ENCODE measurements at regions of chr1 and their contacts with region 1.

Region 1: GRCh38 chr1:63327417-63328139 is 5.2 kb downstream of the FOXD3 start:
- DNase-seq: peak; percentile 89
- H3K4me3 ChIP-seq: peak overlapping the region in 1 of 2 experiments; percentile 34; a peak in 1 of 4 replicates
- H3K27ac ChIP-seq: no peak overlapping the region
- H3K4me1 ChIP-seq: peaks cover 0 to 3% of the 10 kb centered on the region in 2 experiments; a peak in 1 of 4 replicates
- H3K27me3 ChIP-seq: peaks cover 83% of the 10 kb centered on the region
- CTCF ChIP-seq: peak; percentile 80
- EP300 ChIP-seq: no peak
- RAD21 ChIP-seq: peak; percentile 73

Region 2: GRCh38 chr1:63307196-63307794 is 20.3 kb before region 1 on chr1:
- CTCF ChIA-PET with region 1: interaction called, 10 read pairs
- POLR2A ChIA-PET with region 1: no interaction called
- DNase-seq: no peak
- H3K4me3 ChIP-seq: no peak overlapping the region
- H3K27ac ChIP-seq: no peak overlapping the region
- H3K4me1 ChIP-seq: no peaks in the 10 kb centered on the region
- H3K27me3 ChIP-seq: peaks cover 6% of the 10 kb centered on the region; the same call in 1 of the 2 replicates
- CTCF ChIP-seq: no peak
- EP300 ChIP-seq: no peak
- RAD21 ChIP-seq: no peak

Region 3: GRCh38 chr1:63350320-63350719 is 22.7 kb after region 1 on chr1:
- CTCF ChIA-PET with region 1: interaction called, 22 read pairs
- POLR2A ChIA-PET with region 1: no interaction called
- DNase-seq: no peak
- H3K4me3 ChIP-seq: no peak overlapping the region
- H3K27ac ChIP-seq: no peak overlapping the region
- H3K4me1 ChIP-seq: no peaks in the 10 kb centered on the region
- H3K27me3 ChIP-seq: no peaks in the 10 kb centered on the region; the same call in 1 of the 2 replicates
- CTCF ChIP-seq: no peak
- EP300 ChIP-seq: no peak
- RAD21 ChIP-seq: no peak

Region 4: DNA sequence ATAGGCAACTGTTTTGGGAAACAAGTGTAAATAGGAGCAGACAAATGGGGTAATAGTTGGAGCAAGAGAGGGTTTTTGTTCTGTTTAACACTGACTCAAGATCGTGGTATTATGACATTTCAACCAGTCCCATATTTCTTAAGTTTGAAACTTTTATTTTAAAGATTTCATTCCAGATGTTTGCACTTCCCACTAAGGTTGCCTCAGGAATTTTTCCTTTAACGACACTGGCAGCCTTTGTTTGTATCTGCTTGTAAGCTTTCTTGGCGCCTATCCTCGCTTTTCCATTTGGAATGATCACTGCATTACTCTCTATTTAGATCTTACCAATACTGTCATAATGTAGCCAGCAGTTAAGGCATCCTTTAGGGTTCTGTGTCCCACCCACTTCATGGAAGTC is 107.6 kb after region 1 on chr1:
- CTCF ChIA-PET with region 1: interaction called, 50 read pairs
- POLR2A ChIA-PET with region 1: no interaction called
- DNase-seq: no peak
- H3K4me3 ChIP-seq: no peak overlapping the region
- H3K27ac ChIP-seq: no peak overlapping the region
- H3K4me1 ChIP-seq: no peaks in the 10 kb centered on the region
- H3K27me3 ChIP-seq: no peaks in the 10 kb centered on the region
- CTCF ChIP-seq: no peak
- EP300 ChIP-seq: no peak
- RAD21 ChIP-seq: no peak

Region 5: DNA sequence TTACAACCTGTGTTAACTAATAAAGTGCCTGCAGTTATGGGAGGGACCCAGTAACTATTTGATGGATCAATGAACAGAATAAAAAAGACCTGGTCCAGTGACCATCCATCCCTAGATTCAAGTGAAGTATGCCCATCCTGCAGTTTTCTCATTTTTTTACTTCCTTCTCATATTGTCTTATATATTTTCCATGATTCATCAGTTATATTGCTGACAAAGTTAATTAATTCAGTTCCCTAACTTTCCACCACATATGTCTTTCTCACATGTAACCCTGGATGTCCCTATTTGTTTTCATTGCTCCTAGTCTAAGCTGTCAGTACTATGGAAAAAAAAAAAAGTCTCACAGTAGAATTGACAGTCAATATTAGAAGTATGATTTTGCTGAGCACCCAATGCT is 131.2 kb after region 1 on chr1:
- CTCF ChIA-PET with region 1: interaction called, 16 read pairs
- POLR2A ChIA-PET with region 1: no interaction called
- DNase-seq: no peak
- H3K4me3 ChIP-seq: no peak overlapping the region
- H3K27ac ChIP-seq: no peak overlapping the region
- H3K4me1 ChIP-seq: no peaks in the 10 kb centered on the region
- H3K27me3 ChIP-seq: no peaks in the 10 kb centered on the region
- CTCF ChIP-seq: no peak
- EP300 ChIP-seq: no peak
- RAD21 ChIP-seq: no peak